Common myeloid progenitor, CD34-positive (primary cell): ENCODE measurements at regions of chr15 and their contacts with region 1.

Region 1: DNA sequence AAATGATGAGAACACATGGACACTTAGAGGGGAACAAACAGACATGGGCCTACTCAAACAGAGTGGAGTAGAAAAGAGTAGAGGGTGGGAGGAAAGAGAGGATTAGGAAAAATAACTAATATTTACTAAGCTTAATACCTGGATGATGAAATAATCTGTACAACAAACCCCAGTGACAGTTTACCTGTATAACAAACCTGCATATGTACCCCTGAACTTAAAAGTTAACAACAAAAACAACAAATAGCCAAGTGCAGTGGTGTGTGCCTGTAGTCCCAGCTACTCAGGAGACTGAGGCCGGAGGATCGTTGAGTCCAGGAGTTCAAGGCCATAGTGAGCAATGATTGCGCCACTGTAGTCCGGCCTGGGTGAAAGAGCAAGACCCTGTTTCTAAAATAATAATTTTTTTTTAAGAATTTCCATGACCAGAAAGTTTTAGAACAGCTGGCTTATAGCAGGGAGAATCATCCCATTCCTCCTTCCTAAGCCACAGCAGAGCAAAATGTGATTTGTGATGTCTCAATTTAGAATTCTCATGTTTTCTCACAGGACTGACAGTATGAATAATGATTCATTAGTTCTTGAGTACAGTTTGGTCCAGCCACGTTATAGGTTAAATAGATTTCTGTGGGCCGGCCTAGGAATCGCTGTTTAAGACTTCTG is 150.0 kb downstream of the ZNF609 start:
- DNase-seq: no peak
- H3K4me3 ChIP-seq: no peak overlapping the region
- H3K27ac ChIP-seq: no peak overlapping the region
- H3K4me1 ChIP-seq: peaks cover 4 to 10% (median 6%) of the 10 kb centered on the region in 4 experiments
- H3K27me3 ChIP-seq: no peaks in the 10 kb centered on the region

Region 2: DNA sequence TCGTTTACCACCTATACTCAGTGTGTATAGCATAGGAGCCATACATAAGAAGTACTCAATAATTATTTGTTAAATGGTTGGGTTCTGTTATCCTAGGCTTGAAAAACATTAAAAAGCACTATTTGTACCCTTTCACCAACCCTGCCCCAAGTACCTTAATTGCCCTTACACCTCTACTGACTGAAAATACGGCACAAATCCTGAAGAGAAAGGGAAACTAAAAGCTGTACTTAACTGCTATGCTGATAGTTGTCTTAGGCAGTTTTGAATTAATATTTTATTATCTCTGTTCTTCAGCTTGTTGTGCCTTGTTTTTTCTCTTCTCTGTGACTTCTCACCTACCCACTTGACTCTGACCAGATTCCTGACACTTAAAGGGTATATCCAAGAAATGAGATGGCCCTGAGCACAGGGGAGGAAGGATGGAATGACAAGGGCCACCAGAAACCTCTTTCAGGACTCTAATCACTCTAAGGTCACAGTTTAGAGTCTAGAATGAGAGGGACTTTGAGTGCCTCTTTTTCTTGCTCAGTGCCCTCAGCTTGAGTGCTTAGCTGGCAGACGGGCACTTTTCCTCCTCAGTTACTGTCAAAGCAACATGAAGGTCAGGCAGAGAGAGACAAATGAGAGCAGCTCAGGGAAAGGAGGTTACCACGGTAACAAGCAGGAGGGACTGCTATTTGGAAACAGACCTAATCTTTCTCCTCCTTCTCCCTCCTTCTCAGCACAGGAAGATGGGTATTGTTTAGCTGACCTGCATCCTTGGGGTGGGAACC is 13.5 kb before region 1 on chr15:
- CTCF ChIA-PET with region 1: interaction called, 7 read pairs
- POLR2A ChIA-PET with region 1: interaction called, 10 read pairs
- DNase-seq: peak; percentile 34 to 74 (median 67)
- H3K4me3 ChIP-seq: peak overlapping the region in 5 of 7 experiments; percentile 34 to 62 (median 46)
- H3K27ac ChIP-seq: peak overlapping the region; percentile 34 to 85
- H3K4me1 ChIP-seq: peaks cover 3 to 29% (median 13%) of the 10 kb centered on the region in 4 experiments
- H3K27me3 ChIP-seq: no peaks in the 10 kb centered on the region